CD4-positive, alpha-beta memory T cell (primary cell): ENCODE measurements at regions of chr17 and their contacts with region 1.

Region 1: GRCh38 chr17:7687908-7688807 is at the start of gene WRAP53:
- DNase-seq: peak; percentile 95 to 97 (median 96)
- H3K4me3 ChIP-seq: peak within 1 kb of the TSS; percentile 100
- H3K4me3 Mint-ChIP-seq: peak within 1 kb of the TSS; percentile 93 to 98 (median 96)
- H3K27ac ChIP-seq: peak within 1 kb of the TSS; percentile 99
- H3K27ac Mint-ChIP-seq: peak within 1 kb of the TSS; percentile 98 to 100 (median 99)
- H3K4me1 ChIP-seq: peaks cover 40% of the 10 kb centered on the region
- H3K4me1 Mint-ChIP-seq: peaks cover 18 to 53% (median 40%) of the 10 kb centered on the region in 4 donors
- H3K27me3 ChIP-seq: no peaks in the 10 kb centered on the region
- H3K27me3 Mint-ChIP-seq: no peaks in the 10 kb centered on the region
- total RNA-seq, gene WRAP53: 11.9 to 12.5 TPM

Region 2: DNA sequence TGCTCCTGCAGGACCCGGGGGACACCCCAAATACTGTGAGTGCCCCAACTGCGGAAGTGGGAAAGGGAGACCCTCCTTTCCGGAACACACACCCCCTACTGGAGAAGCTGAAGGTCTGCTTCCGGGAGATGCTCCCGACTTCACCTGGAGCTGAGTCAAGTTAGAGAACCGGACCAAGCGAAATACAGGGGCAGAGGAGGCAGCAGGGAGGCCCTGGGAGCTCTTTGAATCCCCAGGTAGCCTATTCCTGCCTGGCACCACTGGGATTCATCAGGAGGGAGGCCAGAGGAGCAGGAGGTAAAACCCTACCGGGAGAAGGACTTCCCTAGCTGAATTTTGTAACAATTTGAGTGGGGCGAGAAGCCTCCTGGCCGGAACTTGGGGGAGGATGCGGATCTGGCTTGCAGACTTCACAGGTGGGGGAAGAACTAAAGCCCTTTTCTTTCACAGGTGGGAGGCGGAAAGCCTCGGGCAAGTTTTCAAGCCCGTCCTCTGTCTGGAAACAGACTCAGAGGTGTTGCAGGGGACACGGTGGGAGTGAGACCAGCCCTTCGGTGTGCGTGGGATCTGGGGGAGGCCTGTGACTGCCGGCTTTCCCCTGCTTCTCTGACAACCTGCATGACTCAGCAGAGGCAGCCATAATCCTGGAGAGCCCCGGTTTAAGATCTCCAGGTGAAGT is 834.3 kb before region 1 on chr17:
- CTCF ChIA-PET with region 1: no interaction called
- POLR2A ChIA-PET with region 1: no interaction called
- intact Hi-C with region 1: no loop called
- DNase-seq: peak in 1 of 5 donors; percentile 10
- H3K4me3 ChIP-seq: no peak overlapping the region
- H3K4me3 Mint-ChIP-seq: peak overlapping the region in 7 of 8 donors; percentile 35 to 73 (median 65)
- H3K27ac ChIP-seq: peak overlapping the region; percentile 17
- H3K27ac Mint-ChIP-seq: peak overlapping the region in 3 of 7 donors; percentile 33 to 50 (median 45)
- H3K4me1 ChIP-seq: no peaks in the 10 kb centered on the region
- H3K4me1 Mint-ChIP-seq: peaks cover 0 to 8% (median 3%) of the 10 kb centered on the region in 4 donors
- H3K27me3 ChIP-seq: no peaks in the 10 kb centered on the region
- H3K27me3 Mint-ChIP-seq: peaks cover 11 to 19% of the 10 kb centered on the region in 2 donors

Region 3: DNA sequence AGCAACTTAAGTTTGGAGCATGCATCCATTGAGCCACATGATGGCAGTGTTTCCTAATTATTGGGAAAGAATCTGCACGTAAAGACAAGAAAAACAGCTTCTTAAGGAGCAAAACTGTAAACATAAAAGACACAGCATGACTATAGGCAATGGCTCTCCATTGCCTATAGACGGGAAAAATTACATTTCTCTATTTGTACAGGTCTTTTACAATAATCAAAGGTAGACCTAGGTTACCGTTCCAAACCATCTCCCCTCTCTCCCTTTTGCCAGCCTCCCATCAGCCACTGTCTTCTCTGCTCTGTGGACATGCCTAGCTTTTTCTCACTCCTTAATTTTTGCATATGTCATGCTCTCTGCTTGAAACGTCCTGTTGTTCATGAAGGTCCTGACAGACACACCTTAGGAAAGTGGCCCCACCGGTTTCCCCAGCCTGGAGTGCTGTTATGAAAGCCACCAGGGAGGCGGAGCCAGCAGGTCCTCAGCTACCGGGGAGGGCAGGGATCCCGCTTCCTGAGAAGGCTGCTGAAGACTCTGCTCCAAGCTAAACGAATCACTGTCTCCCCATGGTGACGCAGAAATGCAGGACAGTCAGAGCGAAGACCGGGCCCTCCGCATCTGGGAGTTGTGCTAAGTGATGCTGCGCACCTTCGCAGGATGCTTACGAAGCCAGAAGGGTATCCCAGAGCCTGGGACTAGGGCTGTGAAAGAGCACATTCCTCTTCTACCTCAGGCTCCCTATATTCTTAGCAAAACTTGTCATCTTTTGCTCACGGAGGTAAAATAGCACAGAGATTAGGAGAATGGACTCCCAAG is 642.0 kb before region 1 on chr17:
- CTCF ChIA-PET with region 1: interaction called, 10 read pairs
- POLR2A ChIA-PET with region 1: interaction called, 22 read pairs
- intact Hi-C with region 1: loop called (anchors 5 kb)
- DNase-seq: peak; percentile 60 to 79 (median 74)
- H3K4me3 ChIP-seq: peak overlapping the region; percentile 67 to 84
- H3K4me3 Mint-ChIP-seq: peak overlapping the region; percentile 83 to 94 (median 90)
- H3K27ac ChIP-seq: peak overlapping the region; percentile 76
- H3K27ac Mint-ChIP-seq: peak overlapping the region; percentile 88 to 98 (median 95)
- H3K4me1 ChIP-seq: peaks cover 47% of the 10 kb centered on the region
- H3K4me1 Mint-ChIP-seq: peaks cover 15 to 54% (median 27%) of the 10 kb centered on the region in 4 donors
- H3K27me3 ChIP-seq: no peaks in the 10 kb centered on the region
- H3K27me3 Mint-ChIP-seq: peaks cover 2% of the 10 kb centered on the region in 2 donors

Region 4: GRCh38 chr17:7329374-7329996 is 358.7 kb before region 1 on chr17:
- CTCF ChIA-PET with region 1: interaction called, 4 read pairs
- POLR2A ChIA-PET with region 1: interaction called, 14 read pairs
- intact Hi-C with region 1: no loop called
- DNase-seq: peak; percentile 97 to 99 (median 97)
- H3K4me3 ChIP-seq: peak overlapping the region; percentile 94 to 99
- H3K4me3 Mint-ChIP-seq: peak overlapping the region; percentile 97 to 98 (median 98)
- H3K27ac ChIP-seq: peak overlapping the region; percentile 82
- H3K27ac Mint-ChIP-seq: peak overlapping the region; percentile 93 to 99 (median 98)
- H3K4me1 ChIP-seq: peaks cover 49% of the 10 kb centered on the region
- H3K4me1 Mint-ChIP-seq: peaks cover 32 to 58% (median 42%) of the 10 kb centered on the region in 4 donors
- H3K27me3 ChIP-seq: no peaks in the 10 kb centered on the region
- H3K27me3 Mint-ChIP-seq: no peaks in the 10 kb centered on the region

Region 5: DNA sequence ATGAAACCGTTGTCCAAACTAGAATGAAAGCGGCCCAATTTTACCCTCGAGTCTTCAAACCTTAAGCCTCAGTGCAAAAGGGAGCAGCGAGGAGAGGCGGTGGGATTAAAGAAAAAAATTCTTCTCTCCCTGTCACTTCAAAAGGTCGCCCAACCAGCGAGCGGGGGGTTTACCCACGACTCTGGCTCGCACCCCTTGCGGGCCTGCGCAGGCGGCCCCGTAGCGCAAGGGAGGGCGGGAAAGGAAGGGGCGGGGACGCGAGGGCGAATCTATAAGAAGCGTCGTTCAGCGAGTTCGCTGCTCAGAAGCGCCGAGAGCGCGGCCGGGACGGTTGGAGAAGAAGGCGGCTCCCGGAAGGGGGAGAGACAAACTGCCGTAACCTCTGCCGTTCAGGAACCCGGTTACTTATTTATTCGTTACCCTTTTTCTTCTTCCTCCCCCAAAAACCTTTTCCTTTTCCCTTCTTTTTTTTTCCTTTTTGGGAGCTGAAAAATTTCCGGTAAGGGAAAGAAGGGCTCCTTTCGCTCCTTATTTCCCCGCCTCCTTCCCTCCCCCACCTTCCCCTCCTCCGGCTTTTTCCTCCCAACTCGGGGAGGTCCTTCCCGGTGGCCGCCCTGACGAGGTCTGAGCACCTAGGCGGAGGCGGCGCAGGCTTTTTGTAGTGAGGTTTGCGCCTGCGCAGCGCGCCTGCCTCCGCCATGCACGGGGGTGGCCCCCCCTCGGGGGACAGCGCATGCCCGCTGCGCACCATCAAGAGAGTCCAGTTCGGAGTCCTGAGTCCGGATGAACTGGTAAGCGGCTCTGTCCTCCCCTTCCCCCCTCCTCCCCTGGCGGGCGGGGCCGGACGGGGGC is 203.9 kb before region 1 on chr17 and contains the start of gene POLR2A:
- CTCF ChIA-PET with region 1: interaction called, 3 read pairs
- POLR2A ChIA-PET with region 1: interaction called, 51 read pairs
- intact Hi-C with region 1: loop called (anchors 2 kb)
- DNase-seq: peak; percentile 97 to 99 (median 99)
- H3K4me3 ChIP-seq: peak within 1 kb of the TSS; percentile 92 to 95
- H3K4me3 Mint-ChIP-seq: peak within 1 kb of the TSS; percentile 96 to 100 (median 98)
- H3K27ac ChIP-seq: peak within 1 kb of the TSS; percentile 99
- H3K27ac Mint-ChIP-seq: peak within 1 kb of the TSS; percentile 99 to 100 (median 100)
- H3K4me1 ChIP-seq: peaks cover 59% of the 10 kb centered on the region
- H3K4me1 Mint-ChIP-seq: peaks cover 47 to 89% (median 65%) of the 10 kb centered on the region in 4 donors
- H3K27me3 ChIP-seq: no peaks in the 10 kb centered on the region
- H3K27me3 Mint-ChIP-seq: no peaks in the 10 kb centered on the region
- total RNA-seq, gene POLR2A: 178 to 191 TPM

Region 6: GRCh38 chr17:7589204-7589868 is 98.8 kb before region 1 on chr17:
- CTCF ChIA-PET with region 1: interaction called, 22 read pairs
- POLR2A ChIA-PET with region 1: interaction called, 116 read pairs
- intact Hi-C with region 1: no loop called
- DNase-seq: peak; percentile 57 to 65 (median 60)
- H3K4me3 ChIP-seq: no peak overlapping the region
- H3K4me3 Mint-ChIP-seq: no peak overlapping the region
- H3K27ac ChIP-seq: no peak overlapping the region
- H3K27ac Mint-ChIP-seq: no peak overlapping the region
- H3K4me1 ChIP-seq: peaks cover 24% of the 10 kb centered on the region
- H3K4me1 Mint-ChIP-seq: peaks cover 5 to 22% (median 11%) of the 10 kb centered on the region in 4 donors
- H3K27me3 ChIP-seq: no peaks in the 10 kb centered on the region
- H3K27me3 Mint-ChIP-seq: no peaks in the 10 kb centered on the region

Region 7: DNA sequence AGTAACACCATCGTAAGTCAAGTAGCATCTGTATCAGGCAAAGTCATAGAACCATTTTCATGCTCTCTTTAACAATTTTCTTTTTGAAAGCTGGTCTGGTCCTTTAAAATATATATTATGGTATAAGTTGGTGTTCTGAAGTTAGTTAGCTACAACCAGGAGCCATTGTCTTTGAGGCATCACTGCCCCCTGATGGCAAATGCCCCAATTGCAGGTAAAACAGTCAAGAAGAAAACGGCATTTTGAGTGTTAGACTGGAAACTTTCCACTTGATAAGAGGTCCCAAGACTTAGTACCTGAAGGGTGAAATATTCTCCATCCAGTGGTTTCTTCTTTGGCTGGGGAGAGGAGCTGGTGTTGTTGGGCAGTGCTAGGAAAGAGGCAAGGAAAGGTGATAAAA is 14.9 kb before region 1 on chr17:
- CTCF ChIA-PET with region 1: interaction called, 13 read pairs
- POLR2A ChIA-PET with region 1: interaction called, 47 read pairs
- intact Hi-C with region 1: no loop called
- DNase-seq: no peak
- H3K4me3 ChIP-seq: no peak overlapping the region
- H3K4me3 Mint-ChIP-seq: no peak overlapping the region
- H3K27ac ChIP-seq: no peak overlapping the region
- H3K27ac Mint-ChIP-seq: no peak overlapping the region
- H3K4me1 ChIP-seq: no peaks in the 10 kb centered on the region
- H3K4me1 Mint-ChIP-seq: peaks cover 5 to 7% (median 6%) of the 10 kb centered on the region in 4 donors
- H3K27me3 ChIP-seq: no peaks in the 10 kb centered on the region
- H3K27me3 Mint-ChIP-seq: no peaks in the 10 kb centered on the region